ENCODE measurements at regions of chr17 and their contacts with region 1.

Region 1: GRCh38 chr17:45135192-45135977 is at the start of gene ACBD4:
- DNase-seq: peak; percentile 99 to 100
- ATAC-seq: peak; percentile 59 to 78
- H3K4me3 ChIP-seq: peak within 1 kb of the TSS; percentile 55
- H3K27ac ChIP-seq: peak within 1 kb of the TSS; percentile 82 to 93
- H3K4me1 ChIP-seq: peaks cover 33% of the 10 kb centered on the region
- CTCF ChIP-seq: peak; percentile 100
- EP300 ChIP-seq: no peak
- POLR2A ChIP-seq: peak; percentile 77
- RAD21 ChIP-seq: peak; percentile 99 to 100
- polyA plus RNA-seq, gene ACBD4: 11.2 and 11.4 TPM in 2 replicates

Region 2: GRCh38 chr17:44689477-44690217 is 445.7 kb before region 1 on chr17 and contains the start of gene CCDC43:
- CTCF ChIA-PET with region 1: no interaction called
- POLR2A ChIA-PET with region 1: no interaction called
- DNase-seq: peak; percentile 96 to 97
- ATAC-seq: peak; percentile 96 to 99
- H3K4me3 ChIP-seq: peak within 1 kb of the TSS; percentile 67
- H3K27ac ChIP-seq: peak within 1 kb of the TSS; percentile 80 to 92
- H3K4me1 ChIP-seq: peaks cover 21% of the 10 kb centered on the region
- CTCF ChIP-seq: no peak
- EP300 ChIP-seq: no peak
- POLR2A ChIP-seq: peak; percentile 98
- RAD21 ChIP-seq: no peak; a peak in 1 of 5 replicates
- polyA plus RNA-seq, gene CCDC43: 24.1 and 34.3 TPM in 2 replicates

Region 3: GRCh38 chr17:44941712-44942331 is 193.6 kb before region 1 on chr17:
- CTCF ChIA-PET with region 1: interaction called, 11 read pairs
- POLR2A ChIA-PET with region 1: no interaction called
- DNase-seq: peak; percentile 62 to 66
- ATAC-seq: peak; percentile 77 to 84
- H3K4me3 ChIP-seq: peak overlapping the region; percentile 17; the same call in 2 of the 3 replicates
- H3K27ac ChIP-seq: peak overlapping the region; percentile 78 to 86
- H3K4me1 ChIP-seq: peaks cover 44% of the 10 kb centered on the region
- CTCF ChIP-seq: no peak
- EP300 ChIP-seq: no peak
- POLR2A ChIP-seq: no peak
- RAD21 ChIP-seq: no peak; a peak in 1 of 5 replicates

Region 4: DNA sequence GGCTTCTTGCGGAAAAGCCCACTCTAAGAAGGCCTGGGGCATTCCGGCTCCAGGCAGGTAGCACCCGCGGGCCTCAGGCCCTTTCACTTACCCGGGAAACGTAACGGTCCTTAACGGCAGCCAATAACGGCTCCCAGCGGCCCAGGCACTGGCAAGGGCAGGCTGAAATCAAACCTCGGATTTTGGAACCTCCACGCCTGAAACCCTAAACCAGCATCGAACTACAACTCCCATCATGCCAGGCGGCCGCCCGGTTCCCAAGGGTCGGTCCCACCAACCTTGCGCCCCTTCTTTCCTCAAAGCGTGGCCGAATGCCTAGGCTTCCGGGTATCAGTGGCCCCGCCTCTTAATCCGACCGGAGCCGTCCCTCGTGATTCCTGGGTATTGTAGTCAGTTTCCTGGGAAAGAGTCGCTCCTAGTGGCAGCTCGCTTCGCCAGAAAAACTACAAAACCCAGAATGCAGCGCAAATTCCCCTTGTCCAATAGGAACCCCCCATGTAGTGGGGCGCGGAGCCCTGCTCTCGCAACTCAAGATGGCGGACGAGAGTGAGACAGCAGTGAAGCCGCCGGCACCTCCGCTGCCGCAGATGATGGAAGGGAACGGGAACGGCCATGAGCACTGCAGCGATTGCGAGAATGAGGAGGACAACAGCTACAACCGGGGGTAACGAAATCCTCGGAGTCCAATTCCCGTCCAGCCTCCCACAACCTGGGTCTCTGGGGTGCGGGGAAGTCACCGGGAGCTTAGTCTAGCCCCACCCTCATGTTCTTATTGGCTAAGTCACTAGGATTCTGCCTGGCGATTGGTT is 74.4 kb before region 1 on chr17 and contains the start of gene NMT1:
- CTCF ChIA-PET with region 1: interaction called, 17 read pairs
- POLR2A ChIA-PET with region 1: interaction called, 6 read pairs
- DNase-seq: peak; percentile 99 to 100
- ATAC-seq: peak; percentile 97
- H3K4me3 ChIP-seq: peak within 1 kb of the TSS; percentile 67
- H3K27ac ChIP-seq: peak within 1 kb of the TSS; percentile 87 to 91
- H3K4me1 ChIP-seq: peaks cover 16% of the 10 kb centered on the region
- CTCF ChIP-seq: no peak
- EP300 ChIP-seq: no peak
- POLR2A ChIP-seq: peak; percentile 91
- RAD21 ChIP-seq: no peak
- polyA plus RNA-seq, gene NMT1: 82.9 and 95.8 TPM in 2 replicates

Region 5: GRCh38 chr17:45123930-45124796 is 11.2 kb before region 1 on chr17:
- CTCF ChIA-PET with region 1: interaction called, 288 read pairs
- POLR2A ChIA-PET with region 1: interaction called, 3 read pairs
- DNase-seq: peak; percentile 95 to 96
- ATAC-seq: peak; percentile 77 to 85
- H3K4me3 ChIP-seq: 0 out of 3 replicates have a peak overlapping the region, but pooled peaks have one; percentile 10
- H3K27ac ChIP-seq: peak overlapping the region; percentile 95 to 98
- H3K4me1 ChIP-seq: peaks cover 75% of the 10 kb centered on the region
- CTCF ChIP-seq: no peak
- EP300 ChIP-seq: peak in 1 of 2 experiments; percentile 72; a peak in 2 of 5 replicates
- POLR2A ChIP-seq: peak; percentile 32; the same call in 1 of the 2 replicates
- RAD21 ChIP-seq: peak in 1 of 2 experiments; percentile 26; a peak in 1 of 5 replicates

Region 6: DNA sequence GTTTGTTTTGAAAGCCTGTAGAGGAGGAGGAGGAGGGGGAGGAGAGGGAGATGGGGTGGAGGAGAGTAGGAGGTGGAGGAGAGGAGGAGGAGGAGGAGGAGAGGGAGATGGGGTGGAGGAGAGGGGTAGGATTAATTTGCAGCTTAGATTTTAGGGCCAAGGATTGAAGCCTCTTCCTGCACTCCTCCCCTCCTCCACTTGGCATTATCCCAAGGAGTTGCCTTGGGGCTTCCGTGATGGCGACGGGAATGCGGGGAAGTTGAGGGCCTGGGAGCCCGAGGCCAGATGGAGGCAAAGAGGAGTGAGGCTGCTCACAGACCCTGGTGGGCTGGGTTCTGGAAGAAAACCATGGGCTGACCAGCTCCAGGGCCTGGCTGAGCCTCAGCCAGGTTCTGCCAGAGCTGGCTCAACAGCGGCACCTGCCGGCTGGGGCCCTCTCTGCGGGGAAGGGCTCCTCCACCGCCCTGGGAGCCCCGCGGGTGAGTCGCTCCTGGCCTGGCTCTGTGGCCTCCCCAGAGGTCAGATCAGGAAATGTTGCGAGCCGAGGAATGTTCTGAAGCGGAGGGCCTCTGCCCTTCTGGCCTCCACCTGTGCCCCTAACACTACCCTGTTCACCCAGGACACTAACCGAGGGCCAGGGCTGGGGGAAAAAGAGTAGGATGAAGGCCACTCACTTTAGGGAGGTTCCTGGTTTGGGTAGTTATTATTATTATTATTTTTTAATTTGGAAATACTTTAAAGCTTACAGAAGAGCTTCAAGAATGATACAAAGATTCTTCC is 62.4 kb after region 1 on chr17:
- CTCF ChIA-PET with region 1: interaction called, 639 read pairs
- POLR2A ChIA-PET with region 1: interaction called, 30 read pairs
- DNase-seq: peak; percentile 80 to 95
- ATAC-seq: peak; percentile 96 to 98
- H3K4me3 ChIP-seq: no peak overlapping the region
- H3K27ac ChIP-seq: peak overlapping the region; percentile 93 to 94
- H3K4me1 ChIP-seq: peaks cover 51% of the 10 kb centered on the region
- CTCF ChIP-seq: peak; percentile 100
- EP300 ChIP-seq: no peak
- POLR2A ChIP-seq: no peak
- RAD21 ChIP-seq: peak; percentile 100

Region 7: DNA sequence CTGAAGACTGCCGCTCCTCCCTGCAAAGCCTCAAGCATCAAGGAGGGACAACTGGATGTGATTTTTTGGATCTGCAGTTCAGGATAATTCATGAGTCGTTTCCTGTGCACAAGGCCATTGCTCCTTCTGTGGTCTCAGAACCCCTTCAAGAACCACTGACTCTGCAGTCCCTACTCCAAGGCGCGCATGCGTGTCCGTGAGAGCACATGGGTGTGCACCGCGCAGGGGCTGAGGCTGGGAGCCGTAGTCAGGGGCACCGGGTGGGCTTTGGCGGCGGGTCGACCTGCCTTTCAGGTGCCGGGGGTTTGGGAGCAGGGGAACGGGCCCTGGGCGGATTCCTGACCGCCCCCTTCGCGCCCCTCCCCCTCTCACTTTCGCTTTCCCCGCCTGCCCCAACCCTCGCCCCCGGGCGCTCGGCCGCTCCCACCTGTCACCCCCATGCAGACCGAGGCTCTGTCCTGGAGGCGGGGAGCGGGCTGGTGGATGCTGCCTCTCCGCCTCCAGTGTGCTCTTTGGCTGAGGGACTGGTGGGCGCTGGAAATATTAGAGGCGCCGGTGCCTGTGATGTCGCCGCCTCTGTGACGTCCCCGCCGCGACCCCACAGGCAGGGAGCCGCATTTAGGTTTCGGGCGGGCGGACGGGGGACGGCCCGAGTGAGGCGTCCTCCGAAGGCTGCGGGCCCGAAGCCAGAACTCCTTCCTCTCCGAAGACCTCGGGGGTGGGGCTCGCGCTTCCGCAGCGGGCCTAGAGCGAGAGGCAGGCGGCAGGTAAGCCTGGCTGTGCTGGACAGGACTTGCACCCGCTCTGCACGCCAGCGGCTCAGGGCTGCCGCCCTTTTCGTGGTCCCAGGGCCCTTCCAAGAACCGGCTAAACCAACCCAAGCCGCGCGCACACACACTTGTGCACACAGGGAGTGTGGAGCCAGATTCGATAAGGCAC is 126.5 kb after region 1 on chr17 and contains the start of gene SPATA32:
- CTCF ChIA-PET with region 1: interaction called, 22 read pairs
- POLR2A ChIA-PET with region 1: no interaction called
- DNase-seq: no peak
- ATAC-seq: no peak
- H3K4me3 ChIP-seq: no peak within 1 kb of the TSS
- H3K27ac ChIP-seq: peak within 1 kb of the TSS in 1 of 2 experiments; percentile 54; a peak in 3 of 6 replicates
- H3K4me1 ChIP-seq: peaks cover 46% of the 10 kb centered on the region
- CTCF ChIP-seq: no peak
- EP300 ChIP-seq: no peak
- POLR2A ChIP-seq: no peak
- RAD21 ChIP-seq: no peak
- polyA plus RNA-seq, gene SPATA32: 0.05 and 0.08 TPM in 2 replicates

Region 8: DNA sequence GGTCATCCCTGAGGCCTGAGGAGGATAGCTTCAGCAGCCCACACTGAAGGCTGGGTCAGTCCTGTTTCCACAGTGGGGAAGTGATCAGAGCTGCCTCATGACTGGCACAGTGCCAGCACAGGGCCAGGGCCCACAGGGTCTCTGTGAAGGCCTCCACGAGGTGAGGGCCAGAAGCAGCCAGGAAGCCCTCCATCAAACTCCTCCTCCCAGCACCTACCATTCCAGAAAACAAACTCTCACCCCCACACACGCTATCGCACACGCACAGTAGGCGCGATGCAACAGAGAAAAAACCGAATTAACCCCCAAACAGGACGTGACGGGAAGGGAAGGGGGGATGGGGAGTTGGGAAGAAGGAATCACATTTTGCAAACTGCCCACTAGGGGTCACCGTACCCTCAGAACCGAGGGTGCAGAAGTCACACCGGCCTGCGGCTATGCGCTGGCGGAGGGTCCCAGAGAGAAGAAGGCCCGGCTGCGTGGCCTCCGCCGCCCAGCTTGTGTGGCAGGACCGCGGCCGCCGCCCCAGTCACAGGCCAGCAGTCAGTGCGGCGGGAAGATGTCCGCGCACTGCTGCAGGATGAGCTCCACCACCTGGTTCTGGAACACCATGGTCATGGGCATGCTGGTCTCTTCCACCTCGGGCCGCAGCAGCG is 259.7 kb after region 1 on chr17:
- CTCF ChIA-PET with region 1: interaction called, 10 read pairs
- POLR2A ChIA-PET with region 1: no interaction called
- DNase-seq: peak; percentile 88 to 95
- ATAC-seq: peak; percentile 68 to 83
- H3K4me3 ChIP-seq: no peak overlapping the region
- H3K27ac ChIP-seq: peak overlapping the region; percentile 23 to 73; a peak in 3 of 6 replicates
- H3K4me1 ChIP-seq: 0 out of 3 replicates have a peak, but pooled peaks cover 3% of the 10 kb centered on the region
- CTCF ChIP-seq: peak; percentile 97
- EP300 ChIP-seq: no peak
- POLR2A ChIP-seq: no peak
- RAD21 ChIP-seq: peak; percentile 89 to 90

Region 9: GRCh38 chr17:45692661-45693060 is 557.3 kb after region 1 on chr17:
- CTCF ChIA-PET with region 1: no interaction called
- POLR2A ChIA-PET with region 1: no interaction called
- DNase-seq: no peak
- ATAC-seq: no peak
- H3K4me3 ChIP-seq: no peak overlapping the region
- H3K27ac ChIP-seq: no peak overlapping the region
- H3K4me1 ChIP-seq: no peaks in the 10 kb centered on the region
- CTCF ChIP-seq: no peak
- EP300 ChIP-seq: no peak
- POLR2A ChIP-seq: no peak
- RAD21 ChIP-seq: no peak